ENCODE measurements at regions of chr9 and their contacts with region 1.

Region 1: GRCh38 chr9:137129456-137130175 is 9.3 kb upstream of the GRIN1 start:
- DNase-seq: peak; percentile 89
- H3K4me3 ChIP-seq: peak overlapping the region; percentile 64 to 83 (median 81)
- H3K27ac ChIP-seq: peak overlapping the region; percentile 53
- H3K4me1 ChIP-seq: peaks cover 14% of the 10 kb centered on the region
- H3K27me3 ChIP-seq: no peaks in the 10 kb centered on the region
- CTCF ChIP-seq: no peak

Region 2: DNA sequence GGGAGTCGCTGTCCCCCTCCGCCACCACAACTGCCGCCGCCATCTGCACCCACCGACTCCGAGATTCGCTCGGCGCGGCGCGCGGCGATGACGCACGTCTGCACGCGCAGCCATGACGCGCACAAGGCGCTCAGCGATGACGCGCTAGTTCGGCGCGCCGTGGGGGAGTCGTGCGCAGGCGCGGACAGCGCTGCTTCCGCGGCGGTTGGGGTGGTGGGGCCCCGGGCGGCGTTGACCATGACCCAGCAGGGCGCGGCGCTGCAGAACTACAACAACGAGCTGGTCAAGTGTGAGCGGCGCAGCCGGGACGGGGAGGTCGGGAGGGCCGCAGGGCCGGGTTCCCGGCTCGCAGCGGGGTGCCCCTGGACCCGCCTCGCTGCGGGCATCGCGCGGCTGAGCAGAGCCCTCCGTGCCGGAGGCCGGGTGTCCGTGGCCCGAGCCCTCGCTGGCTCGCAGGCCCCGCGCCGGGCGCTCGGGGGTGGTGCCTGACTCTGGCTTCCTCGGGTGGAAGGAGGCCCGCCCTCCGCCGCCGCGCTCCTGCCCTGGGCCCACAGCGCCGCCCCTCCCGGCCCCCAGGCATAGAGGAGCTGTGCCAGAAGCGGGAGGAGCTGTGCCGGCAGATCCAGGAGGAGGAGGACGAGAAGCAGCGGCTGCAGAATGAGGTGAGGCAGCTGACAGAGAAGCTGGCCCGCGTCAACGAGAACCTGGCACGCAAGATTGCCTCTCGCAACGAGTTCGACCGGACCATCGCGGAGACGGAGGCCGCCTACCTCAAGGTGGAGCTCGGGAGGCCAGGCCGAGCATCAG is 59.1 kb after region 1 on chr9 and contains the starts of genes ANAPC2 and SSNA1:
- CTCF ChIA-PET with region 1: no interaction called
- dilution Hi-C with region 1: no loop called
- in situ Hi-C with region 1: no loop called
- intact Hi-C with region 1: loop called (anchors 2 kb)
- DNase-seq: peak; percentile 91
- H3K4me3 ChIP-seq: peak within 1 kb of the TSS; percentile 87 to 98 (median 92)
- H3K27ac ChIP-seq: peak within 1 kb of the TSS; percentile 71
- H3K4me1 ChIP-seq: peaks cover 28% of the 10 kb centered on the region
- H3K27me3 ChIP-seq: no peaks in the 10 kb centered on the region
- CTCF ChIP-seq: peak in 1 of 2 donors; percentile 60
- total RNA-seq, gene ANAPC2: 15.5 to 45.3 TPM
- total RNA-seq, gene SSNA1: 36.2 to 70.2 TPM